H1 (cell line): ENCODE measurements at regions of chr22 and their contacts with region 1.

Region 1: DNA sequence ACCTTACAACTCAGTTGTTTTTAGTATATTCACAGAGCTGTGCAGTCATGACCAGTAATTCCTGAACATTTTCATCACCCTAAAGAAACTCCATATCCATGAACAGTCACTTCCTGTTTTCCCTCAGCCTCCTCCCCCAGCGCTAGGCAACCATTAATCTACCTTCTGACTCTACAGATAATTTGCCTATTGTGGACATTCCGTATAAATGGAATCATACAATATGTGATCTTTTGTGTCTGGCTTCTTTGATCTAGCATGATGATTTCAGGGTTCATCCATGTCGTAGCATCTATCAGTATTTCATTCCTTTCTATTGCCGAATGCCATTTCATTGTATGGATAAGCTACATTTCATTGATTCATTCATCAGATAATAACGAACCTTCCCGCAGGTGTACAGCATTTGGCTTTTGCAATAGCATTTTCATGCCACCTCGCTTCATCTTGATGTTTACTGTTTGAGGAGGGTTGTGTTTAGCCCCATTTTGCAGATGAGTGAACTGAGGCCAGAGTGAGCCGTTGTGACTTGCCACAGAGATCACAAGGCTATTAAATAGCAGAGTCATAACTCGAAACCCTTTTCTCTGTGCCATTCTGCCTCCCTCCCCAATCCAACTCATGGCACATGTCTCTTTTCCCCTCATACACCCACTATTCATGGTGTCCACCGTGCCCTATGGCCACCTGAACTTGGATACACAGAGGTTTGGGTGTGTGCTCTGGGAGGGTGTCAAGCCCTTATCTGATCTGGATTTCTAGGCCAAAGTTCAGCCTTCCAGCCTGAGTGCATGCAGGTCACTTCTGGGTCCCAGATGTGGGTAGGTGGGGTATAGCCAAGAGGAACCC is 11.1 kb upstream of the MYH9 start:
- DNase-seq: no peak
- H3K4me3 ChIP-seq: no peak overlapping the region
- H3K27ac ChIP-seq: no peak overlapping the region
- H3K4me1 ChIP-seq: peaks cover 0 to 5% (median 2%) of the 10 kb centered on the region in 4 experiments; a peak in 4 of 7 replicates
- H3K27me3 ChIP-seq: no peaks in the 10 kb centered on the region
- CTCF ChIP-seq: no peak
- EP300 ChIP-seq: no peak
- POLR2A ChIP-seq: no peak
- RAD21 ChIP-seq: no peak

Region 2: GRCh38 chr22:36409911-36410756 is 11.3 kb after region 1 on chr22:
- CTCF ChIA-PET with region 1: interaction called, 4 read pairs
- POLR2A ChIA-PET with region 1: interaction called, 19 read pairs
- DNase-seq: peak; percentile 90 to 96
- H3K4me3 ChIP-seq: peak overlapping the region; percentile 41 to 63 (median 53)
- H3K27ac ChIP-seq: peak overlapping the region; percentile 96
- H3K4me1 ChIP-seq: peaks cover 0 to 9% (median 7%) of the 10 kb centered on the region in 4 experiments; a peak in 5 of 7 replicates
- H3K27me3 ChIP-seq: no peaks in the 10 kb centered on the region
- CTCF ChIP-seq: no peak
- EP300 ChIP-seq: no peak; a peak in 1 of 3 replicates
- POLR2A ChIP-seq: peak; percentile 91 to 96
- RAD21 ChIP-seq: 0 out of 4 replicates have a peak, but pooled peaks of 1 of the 2 experiments have one; percentile 0

Region 3: DNA sequence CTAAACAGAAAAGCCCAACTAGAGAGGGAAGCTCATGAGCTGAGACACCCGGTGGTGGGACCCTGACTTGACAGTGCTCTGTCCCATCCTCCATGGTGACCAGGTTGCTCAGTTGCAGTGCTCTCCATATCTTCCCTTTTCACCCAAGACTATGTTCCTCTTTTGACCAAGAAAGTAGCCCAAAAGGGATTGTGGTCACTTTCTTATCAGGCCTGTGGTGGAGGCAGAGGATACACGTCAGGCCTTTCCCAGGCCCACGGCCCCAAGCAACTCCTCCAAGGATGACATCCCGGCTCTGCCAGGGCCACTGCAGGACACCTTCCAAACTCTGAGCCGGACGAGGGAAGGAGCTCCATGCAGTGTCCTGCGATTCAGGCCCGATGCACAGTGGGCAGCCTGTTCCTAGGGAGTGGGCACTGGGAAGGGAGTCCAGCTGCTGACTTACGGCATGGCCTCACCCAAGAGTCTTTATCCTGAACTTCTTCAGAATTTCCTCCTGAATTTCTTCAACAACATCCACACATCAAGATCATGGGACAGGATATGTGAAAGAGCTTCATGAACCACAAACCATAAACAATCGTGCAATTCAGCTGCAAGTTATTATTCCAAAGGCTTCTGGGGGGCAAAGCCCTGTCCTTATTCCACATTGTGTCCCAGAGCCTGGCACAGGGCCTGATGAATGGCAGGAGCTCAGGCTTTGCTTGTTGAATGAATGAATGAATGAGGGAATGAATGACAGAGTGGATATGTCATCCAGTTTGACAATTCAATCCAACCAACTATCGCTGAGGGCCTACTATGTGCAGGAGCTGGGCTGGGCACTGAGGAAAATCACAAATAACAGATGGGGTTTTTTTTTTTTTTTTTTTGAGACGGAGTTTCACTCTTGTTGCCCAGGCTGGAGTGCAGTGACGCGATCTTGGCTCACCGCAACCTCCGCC is 24.9 kb after region 1 on chr22:
- CTCF ChIA-PET with region 1: no interaction called
- POLR2A ChIA-PET with region 1: no interaction called
- DNase-seq: no peak
- H3K4me3 ChIP-seq: no peak overlapping the region
- H3K27ac ChIP-seq: no peak overlapping the region
- H3K4me1 ChIP-seq: peaks cover 0 to 9% (median 3%) of the 10 kb centered on the region in 4 experiments; a peak in 5 of 7 replicates
- H3K27me3 ChIP-seq: no peaks in the 10 kb centered on the region
- CTCF ChIP-seq: peak in 1 of 3 experiments; percentile 6; a peak in 1 of 4 replicates
- EP300 ChIP-seq: no peak
- POLR2A ChIP-seq: no peak
- RAD21 ChIP-seq: peak; percentile 7 to 25; a peak in 1 of 4 replicates

Region 4: DNA sequence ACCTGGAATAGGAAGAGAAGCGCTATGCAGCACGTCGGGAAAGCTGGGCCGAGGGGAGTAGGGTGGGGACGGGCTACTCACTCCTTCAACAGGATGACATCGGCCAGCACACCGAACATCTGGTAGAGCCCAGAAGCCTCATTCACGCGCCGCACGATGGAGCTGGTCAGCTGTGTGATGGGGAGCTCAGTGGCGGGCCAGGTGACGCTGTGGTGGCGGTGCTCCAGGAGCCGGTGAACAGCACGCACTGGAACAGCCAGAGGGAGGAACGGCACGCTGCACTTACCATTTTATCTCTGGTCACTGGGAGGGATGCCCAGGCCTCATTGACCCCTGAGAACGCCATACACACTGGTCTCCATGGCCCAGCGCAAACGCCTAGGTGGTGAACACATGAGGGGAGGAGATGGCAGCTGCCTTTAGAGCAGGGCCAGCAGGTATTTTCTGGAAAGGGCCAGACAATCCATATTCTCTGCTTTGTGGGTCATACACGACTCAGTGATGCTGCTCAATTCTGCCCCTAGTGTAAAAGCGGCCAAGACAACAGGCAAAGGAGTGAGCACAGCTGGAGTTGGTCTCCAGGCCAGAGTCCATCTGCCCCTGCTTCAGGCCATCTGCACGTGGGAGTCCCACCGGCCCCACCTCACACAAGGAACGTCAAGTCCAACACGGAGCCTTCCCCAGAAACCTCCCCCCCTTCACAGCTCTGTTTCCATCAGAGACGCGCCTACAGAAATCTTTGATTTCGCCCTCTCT is 99.2 kb after region 1 on chr22:
- CTCF ChIA-PET with region 1: no interaction called
- POLR2A ChIA-PET with region 1: no interaction called
- DNase-seq: no peak
- H3K4me3 ChIP-seq: no peak overlapping the region
- H3K27ac ChIP-seq: no peak overlapping the region
- H3K4me1 ChIP-seq: no peaks in the 10 kb centered on the region
- H3K27me3 ChIP-seq: no peaks in the 10 kb centered on the region
- CTCF ChIP-seq: peak in 2 of 3 experiments; percentile 11 to 15; a peak in 2 of 4 replicates
- EP300 ChIP-seq: no peak
- POLR2A ChIP-seq: no peak
- RAD21 ChIP-seq: no peak

Region 5: GRCh38 chr22:36636916-36637315 is 238.1 kb after region 1 on chr22:
- CTCF ChIA-PET with region 1: no interaction called
- POLR2A ChIA-PET with region 1: no interaction called
- DNase-seq: no peak
- H3K4me3 ChIP-seq: no peak overlapping the region
- H3K27ac ChIP-seq: no peak overlapping the region
- H3K4me1 ChIP-seq: peaks cover 2 to 7% (median 5%) of the 10 kb centered on the region in 4 experiments; a peak in 4 of 7 replicates
- H3K27me3 ChIP-seq: peaks cover 0 to 6% (median 1%) of the 10 kb centered on the region in 4 experiments; a peak in 3 of 7 replicates
- CTCF ChIP-seq: no peak
- EP300 ChIP-seq: no peak
- POLR2A ChIP-seq: no peak
- RAD21 ChIP-seq: no peak